ENCODE measurements at regions of chr2 and their contacts with region 1.

Region 1: GRCh38 chr2:202178342-202178958 is 59.9 kb downstream of the SUMO1 start:
- DNase-seq: no peak
- H3K4me3 ChIP-seq: no peak overlapping the region
- CTCF ChIP-seq: peak; percentile 65

Region 2: DNA sequence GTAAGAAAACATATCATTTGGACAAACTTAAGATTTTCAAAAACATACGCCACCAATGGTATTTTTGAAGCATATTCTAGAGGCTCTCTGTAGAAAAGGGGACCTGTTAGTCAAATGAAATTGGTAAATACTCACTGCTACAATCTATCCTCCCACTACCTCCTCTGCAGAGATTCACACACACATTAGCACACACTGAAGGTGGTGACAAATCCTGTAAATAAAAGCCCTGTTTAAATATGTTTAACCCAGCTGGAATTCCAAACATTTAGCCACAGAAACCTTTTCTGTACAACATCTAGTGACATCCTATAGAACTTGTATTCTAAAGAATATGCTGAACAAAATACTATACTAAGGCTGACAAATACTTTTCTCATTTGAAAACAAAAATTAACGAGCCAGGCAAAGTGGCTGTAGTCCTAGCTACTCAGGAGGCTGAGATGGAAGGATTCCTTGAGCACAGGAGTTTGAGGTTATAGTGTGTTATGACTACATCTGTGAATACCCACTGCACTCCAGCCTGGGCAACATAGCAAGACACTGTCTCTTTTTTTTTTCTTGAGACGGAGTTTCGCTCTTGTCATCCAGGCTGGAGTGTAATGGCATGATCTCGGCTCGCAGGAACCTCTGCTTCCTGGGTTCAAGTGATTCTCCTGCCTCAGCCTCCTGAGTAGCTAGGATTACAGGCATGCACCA is 423.6 kb before region 1 on chr2:
- CTCF ChIA-PET with region 1: interaction called, 10 read pairs
- POLR2A ChIA-PET with region 1: no interaction called
- DNase-seq: peak; percentile 12
- H3K4me3 ChIP-seq: no peak overlapping the region
- CTCF ChIP-seq: no peak

Region 3: GRCh38 chr2:201795607-201796477 is 382.6 kb before region 1 on chr2:
- CTCF ChIA-PET with region 1: interaction called, 59 read pairs
- POLR2A ChIA-PET with region 1: no interaction called
- DNase-seq: no peak
- H3K4me3 ChIP-seq: no peak overlapping the region
- CTCF ChIP-seq: peak; percentile 81

Region 4: GRCh38 chr2:202034249-202035088 is 144.0 kb before region 1 on chr2:
- CTCF ChIA-PET with region 1: interaction called, 32 read pairs
- POLR2A ChIA-PET with region 1: no interaction called
- DNase-seq: no peak
- H3K4me3 ChIP-seq: peak overlapping the region; percentile 91
- CTCF ChIP-seq: no peak

Region 5: GRCh38 chr2:202104278-202104870 is 74.1 kb before region 1 on chr2:
- CTCF ChIA-PET with region 1: interaction called, 52 read pairs
- POLR2A ChIA-PET with region 1: interaction called, 3 read pairs
- DNase-seq: no peak
- H3K4me3 ChIP-seq: no peak overlapping the region
- CTCF ChIP-seq: peak; percentile 85

Region 6: GRCh38 chr2:202165945-202166344 is 12.5 kb before region 1 on chr2:
- CTCF ChIA-PET with region 1: interaction called, 30 read pairs
- POLR2A ChIA-PET with region 1: no interaction called
- DNase-seq: no peak
- H3K4me3 ChIP-seq: no peak overlapping the region
- CTCF ChIP-seq: no peak

Region 7: GRCh38 chr2:202339071-202339870 is 160.8 kb after region 1 on chr2:
- CTCF ChIA-PET with region 1: no interaction called
- POLR2A ChIA-PET with region 1: no interaction called
- DNase-seq: peak; percentile 9
- H3K4me3 ChIP-seq: no peak overlapping the region
- CTCF ChIP-seq: no peak

Measured in AG04449 (cell line).